H1 (cell line): ENCODE measurements at regions of chr5 and their contacts with region 1.

Region 1: GRCh38 chr5:115634343-115635132 is 8.7 kb upstream of the TMED7 start:
- DNase-seq: peak; percentile 66 to 92
- H3K4me3 ChIP-seq: peak overlapping the region; percentile 1 to 54 (median 28); a peak in 6 of 8 replicates
- H3K27ac ChIP-seq: 0 out of 2 replicates have a peak overlapping the region, but pooled peaks have one; percentile 30
- H3K4me1 ChIP-seq: peaks cover 0 to 16% (median 7%) of the 10 kb centered on the region in 4 experiments; a peak in 4 of 7 replicates
- H3K27me3 ChIP-seq: no peaks in the 10 kb centered on the region
- CTCF ChIP-seq: peak; percentile 80 to 86 (median 85)
- EP300 ChIP-seq: no peak
- POLR2A ChIP-seq: no peak
- RAD21 ChIP-seq: peak; percentile 95 to 96

Region 2: DNA sequence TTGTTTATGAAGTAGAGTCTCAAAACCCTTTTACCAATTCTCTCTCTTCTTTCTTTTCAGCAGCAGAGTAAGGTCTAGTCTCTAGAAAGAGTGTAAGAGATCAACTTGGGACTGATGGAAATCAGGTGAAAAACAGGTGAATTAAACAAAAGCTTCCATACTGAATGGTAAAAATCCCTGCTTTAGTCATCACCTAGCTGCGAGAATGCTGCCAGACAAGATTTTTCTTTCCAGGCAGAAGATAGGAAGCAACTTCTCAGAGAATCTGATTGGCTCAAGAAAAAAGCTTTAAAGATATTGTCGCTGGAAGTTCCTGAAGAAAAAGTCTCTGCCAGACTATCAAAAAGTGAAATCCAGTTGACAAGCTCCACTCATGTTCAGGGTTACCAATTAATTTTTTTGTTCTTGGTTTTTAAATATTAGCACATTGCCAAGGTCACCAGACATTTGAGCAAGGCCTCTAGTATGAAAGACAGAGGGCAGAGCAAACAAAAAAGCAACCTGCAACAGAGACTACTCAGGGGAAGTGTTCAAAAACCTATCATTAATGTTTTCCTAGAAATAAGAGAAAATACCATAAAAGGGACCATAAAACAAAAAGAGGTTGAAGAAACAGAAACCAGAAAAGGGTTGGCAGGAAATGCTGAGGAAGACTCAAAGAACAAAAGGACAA is 172.6 kb after region 1 on chr5:
- CTCF ChIA-PET with region 1: interaction called, 11 read pairs
- POLR2A ChIA-PET with region 1: no interaction called
- DNase-seq: no peak
- H3K4me3 ChIP-seq: no peak overlapping the region
- H3K27ac ChIP-seq: no peak overlapping the region
- H3K4me1 ChIP-seq: peaks cover 0 to 3% (median 0%) of the 10 kb centered on the region in 4 experiments; a peak in 2 of 7 replicates
- H3K27me3 ChIP-seq: no peaks in the 10 kb centered on the region
- CTCF ChIP-seq: no peak
- EP300 ChIP-seq: no peak
- POLR2A ChIP-seq: no peak
- RAD21 ChIP-seq: no peak

Region 3: GRCh38 chr5:115825948-115826347 is 191.4 kb after region 1 on chr5:
- CTCF ChIA-PET with region 1: interaction called, 11 read pairs
- POLR2A ChIA-PET with region 1: interaction called, 3 read pairs
- DNase-seq: no peak
- H3K4me3 ChIP-seq: no peak overlapping the region
- H3K27ac ChIP-seq: no peak overlapping the region
- H3K4me1 ChIP-seq: no peaks in the 10 kb centered on the region
- H3K27me3 ChIP-seq: no peaks in the 10 kb centered on the region
- CTCF ChIP-seq: no peak
- EP300 ChIP-seq: no peak
- POLR2A ChIP-seq: no peak
- RAD21 ChIP-seq: no peak

Region 4: DNA sequence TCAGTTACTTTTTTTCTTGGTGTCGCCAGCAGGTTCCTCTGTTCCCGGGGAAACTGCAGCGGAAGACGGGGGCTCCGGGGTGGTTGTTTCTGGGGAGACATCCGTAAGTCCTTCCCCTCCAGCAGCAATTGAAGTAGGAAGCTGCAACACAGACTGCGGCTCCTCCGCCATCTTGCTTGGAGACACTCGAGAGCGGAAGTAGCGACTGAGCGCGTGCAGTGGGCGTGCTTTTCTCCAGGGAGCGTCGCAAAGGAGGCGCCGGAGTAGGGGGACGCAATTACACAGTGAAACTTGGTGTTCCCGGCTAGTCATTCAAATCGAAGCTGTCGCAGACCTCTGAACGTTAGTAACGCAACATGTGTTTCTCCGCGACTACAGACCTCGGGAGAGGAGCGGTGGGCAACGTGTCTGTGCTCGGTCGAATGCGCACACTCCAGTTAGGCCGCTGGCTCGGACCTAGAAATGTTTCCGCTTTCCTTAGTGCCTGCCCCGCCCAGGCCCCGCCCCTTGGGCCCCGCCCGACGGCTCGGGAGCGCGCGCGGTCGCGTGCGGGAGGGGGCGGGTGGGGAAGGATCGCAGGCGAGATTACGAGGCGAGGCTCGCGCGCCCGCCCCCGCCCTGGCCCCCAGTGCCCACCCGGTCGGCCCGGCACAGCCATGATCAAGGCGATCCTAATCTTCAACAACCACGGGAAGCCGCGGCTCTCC is 207.0 kb after region 1 on chr5 and contains the starts of genes AP3S1 and ATG12:
- CTCF ChIA-PET with region 1: interaction called, 26 read pairs
- POLR2A ChIA-PET with region 1: interaction called, 8 read pairs
- DNase-seq: peak; percentile 67 to 92
- H3K4me3 ChIP-seq: peak within 1 kb of the TSS; percentile 75 to 89 (median 84)
- H3K27ac ChIP-seq: peak within 1 kb of the TSS; percentile 97
- H3K4me1 ChIP-seq: peaks cover 0 to 5% (median 1%) of the 10 kb centered on the region in 4 experiments; a peak in 2 of 7 replicates
- H3K27me3 ChIP-seq: no peaks in the 10 kb centered on the region
- CTCF ChIP-seq: no peak
- EP300 ChIP-seq: no peak
- POLR2A ChIP-seq: peak in 1 of 2 experiments; percentile 85; a peak in 2 of 3 replicates
- RAD21 ChIP-seq: no peak
- total RNA-seq, gene AP3S1: 72.7 and 93.0 TPM in 2 replicates
- total RNA-seq, gene ATG12: 49.3 and 51.4 TPM in 2 replicates

Region 5: DNA sequence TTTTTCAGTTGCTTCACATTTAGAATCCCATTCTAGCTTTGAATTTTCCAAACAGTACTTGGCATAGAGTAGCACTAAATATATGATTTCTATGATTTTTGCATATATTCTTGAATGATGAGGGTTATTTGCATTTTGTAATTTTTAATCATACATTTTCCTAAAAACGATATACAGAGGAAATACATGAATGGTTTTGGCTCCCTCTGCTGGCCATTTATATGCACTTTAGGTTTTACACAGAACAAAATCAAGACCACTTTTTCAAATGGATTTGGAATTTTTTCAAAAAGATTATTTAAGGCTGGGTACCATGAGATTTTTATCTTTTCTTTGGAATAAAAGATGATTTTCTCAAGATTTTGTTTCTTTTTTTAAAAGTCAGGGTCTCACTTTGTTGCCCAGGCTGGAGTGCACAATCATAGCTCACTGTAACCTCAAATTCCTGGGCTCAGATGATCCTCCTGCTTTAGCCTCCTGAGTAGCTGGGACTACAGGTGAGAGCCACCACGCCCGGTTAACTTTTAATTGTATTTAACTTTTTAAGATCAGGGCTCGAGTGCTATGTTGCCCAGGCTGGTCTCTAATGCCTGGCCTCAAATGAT is 433.6 kb after region 1 on chr5:
- CTCF ChIA-PET with region 1: interaction called, 14 read pairs
- POLR2A ChIA-PET with region 1: no interaction called
- DNase-seq: no peak
- H3K4me3 ChIP-seq: no peak overlapping the region
- H3K27ac ChIP-seq: no peak overlapping the region
- H3K4me1 ChIP-seq: no peaks in the 10 kb centered on the region
- H3K27me3 ChIP-seq: peaks cover 0 to 2% (median 0%) of the 10 kb centered on the region in 4 experiments; a peak in 1 of 7 replicates
- CTCF ChIP-seq: peak in 2 of 3 experiments; percentile 33 to 54; a peak in 2 of 4 replicates
- EP300 ChIP-seq: no peak
- POLR2A ChIP-seq: no peak
- RAD21 ChIP-seq: peak; percentile 66 to 78